GM10248 (cell line): ENCODE measurements at regions of chr1 and their contacts with region 1.

Region 1: GRCh38 chr1:154747740-154748404 is 122.2 kb downstream of the KCNN3 start:
- DNase-seq: peak; percentile 84
- CTCF ChIP-seq: no peak

Region 2: DNA sequence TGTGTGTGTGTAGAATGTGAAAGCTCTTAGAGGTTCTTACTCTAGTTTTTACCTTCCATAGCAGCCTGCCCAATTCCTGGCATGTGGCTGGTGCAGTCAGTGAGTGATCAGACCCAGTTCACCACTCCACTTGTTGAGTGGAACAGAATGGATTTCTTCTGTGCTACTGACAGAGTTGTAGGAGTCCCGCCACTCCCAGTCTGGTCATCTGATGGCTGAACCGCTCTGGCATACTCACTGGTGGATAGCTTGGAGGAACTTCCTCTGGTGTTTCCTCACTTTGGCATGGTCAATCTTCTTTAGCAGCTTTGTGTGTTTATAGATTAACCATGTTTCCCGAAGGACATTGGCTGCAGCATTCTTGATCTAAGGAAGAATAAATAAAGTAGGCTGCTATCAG is 33.2 kb before region 1 on chr1:
- CTCF ChIA-PET with region 1: no interaction called
- POLR2A ChIA-PET with region 1: no interaction called
- DNase-seq: no peak
- CTCF ChIP-seq: no peak

Region 3: DNA sequence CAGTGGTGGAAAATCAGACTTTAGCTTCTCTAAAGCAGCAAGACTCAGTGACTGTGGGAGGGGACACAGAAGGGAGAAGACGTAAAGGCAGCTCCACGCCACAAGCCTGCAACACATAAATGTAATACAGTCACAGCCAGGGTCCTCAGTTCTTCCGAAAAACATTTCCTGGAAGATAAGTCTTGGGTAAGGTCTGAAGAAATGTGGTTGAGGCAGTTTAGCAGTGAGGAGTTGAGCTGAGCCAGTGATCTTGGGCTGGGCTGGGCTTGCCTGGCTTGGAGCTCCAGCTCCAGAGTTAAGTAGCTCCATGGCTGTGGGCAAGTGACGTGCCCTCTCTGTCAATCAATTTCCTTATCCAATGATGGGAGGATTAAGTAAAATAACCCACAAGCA is 12.0 kb before region 1 on chr1:
- CTCF ChIA-PET with region 1: interaction called, 12 read pairs
- POLR2A ChIA-PET with region 1: no interaction called
- DNase-seq: no peak
- CTCF ChIP-seq: no peak

Region 4: GRCh38 chr1:154760469-154760933 is 12.6 kb after region 1 on chr1:
- CTCF ChIA-PET with region 1: interaction called, 11 read pairs
- POLR2A ChIA-PET with region 1: no interaction called
- DNase-seq: peak; percentile 88
- CTCF ChIP-seq: peak; percentile 85